ENCODE measurements at regions of chr20 and their contacts with region 1.

Region 1: GRCh38 chr20:492159-492558 is 29.8 kb upstream of the TBC1D20 start:
- DNase-seq: no peak
- CTCF ChIP-seq: no peak

Region 2: DNA sequence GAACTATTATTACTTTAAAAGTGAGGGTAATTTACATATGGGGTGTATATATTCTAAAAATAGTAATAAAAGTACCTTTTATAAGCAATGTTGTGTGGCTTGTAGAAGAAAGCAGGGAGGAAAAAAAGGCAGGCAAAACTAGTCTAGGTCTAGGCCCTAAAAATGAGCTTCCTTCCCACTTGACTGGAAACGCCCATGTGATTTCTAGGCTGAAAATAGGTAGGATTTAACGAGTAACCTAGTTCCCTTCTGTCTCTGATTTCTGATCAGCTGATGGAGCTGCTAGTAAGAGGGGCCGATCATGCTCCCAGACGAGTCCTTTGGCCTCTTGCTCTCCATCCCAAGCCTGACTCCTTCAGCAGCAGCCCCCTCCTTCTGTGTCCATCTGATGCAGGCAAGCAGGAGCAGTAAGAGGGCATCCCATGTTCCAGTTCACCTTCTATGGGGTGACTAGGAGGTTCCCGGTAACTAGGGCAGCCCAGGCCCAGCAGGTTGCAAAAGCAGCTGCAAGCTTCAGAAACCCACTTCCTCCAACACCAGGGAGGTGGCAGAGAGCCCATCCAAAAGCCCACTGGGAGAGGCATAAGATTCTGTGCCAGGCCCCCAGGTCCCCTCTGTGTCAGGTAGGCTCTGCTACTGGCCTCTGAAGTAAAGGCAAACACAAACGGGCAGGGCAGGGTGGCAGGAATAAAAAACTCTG is 54.2 kb before region 1 on chr20:
- CTCF ChIA-PET with region 1: no interaction called
- POLR2A ChIA-PET with region 1: no interaction called
- DNase-seq: no peak
- CTCF ChIP-seq: no peak

Region 3: DNA sequence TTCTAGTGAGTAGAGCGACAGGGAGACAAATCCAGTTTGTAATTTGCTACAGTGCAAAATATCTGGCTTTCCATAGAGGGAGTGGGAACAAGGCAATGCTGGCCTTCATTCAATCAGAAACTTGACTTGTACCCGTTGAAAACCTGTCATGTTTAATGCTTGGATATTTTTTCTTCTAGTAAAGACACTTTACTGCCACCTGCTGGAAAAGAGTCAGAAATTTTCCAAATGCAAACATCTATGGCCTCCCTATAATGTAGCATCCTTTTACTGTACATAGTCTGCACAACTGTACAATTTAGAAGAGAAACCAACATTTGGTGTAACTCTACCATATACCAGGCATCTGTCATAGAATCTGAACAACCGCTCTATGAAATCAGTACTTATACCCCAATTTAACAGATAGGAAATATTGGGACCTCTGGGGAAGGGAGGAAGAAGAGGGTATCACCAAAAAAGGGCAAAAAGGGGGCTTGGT is 13.2 kb before region 1 on chr20:
- CTCF ChIA-PET with region 1: interaction called, 14 read pairs
- POLR2A ChIA-PET with region 1: no interaction called
- DNase-seq: peak; percentile 65
- CTCF ChIP-seq: peak; percentile 49